ENCODE measurements at regions of chr17 and their contacts with region 1.

Region 1: GRCh38 chr17:409848-410545 is 57.4 kb upstream of the RPH3AL start:
- DNase-seq: peak; percentile 100
- ATAC-seq: peak; percentile 89
- H3K4me3 ChIP-seq: peak overlapping the region; percentile 85 to 87
- H3K27ac ChIP-seq: peak overlapping the region; percentile 39 to 90
- H3K4me1 ChIP-seq: peaks cover 0 to 38% of the 10 kb centered on the region in 2 donors
- H3K27me3 ChIP-seq: no peaks in the 10 kb centered on the region
- CTCF ChIP-seq: no peak

Region 2: GRCh38 chr17:233473-233941 is 176.5 kb before region 1 on chr17:
- intact Hi-C with region 1: no loop called
- DNase-seq: peak in 1 of 4 donors; percentile 31
- ATAC-seq: no peak
- H3K4me3 ChIP-seq: no peak overlapping the region
- H3K27ac ChIP-seq: peak overlapping the region in 1 of 2 donors; percentile 63
- H3K4me1 ChIP-seq: peaks cover 0 to 22% of the 10 kb centered on the region in 2 donors
- H3K27me3 ChIP-seq: no peaks in the 10 kb centered on the region
- CTCF ChIP-seq: no peak

Region 3: GRCh38 chr17:700504-701094 is 290.6 kb after region 1 on chr17:
- intact Hi-C with region 1: loop called in 1 of 2 experiments (anchors 2 kb)
- DNase-seq: peak in 1 of 4 donors; percentile 39
- ATAC-seq: peak; percentile 37
- H3K4me3 ChIP-seq: no peak overlapping the region
- H3K27ac ChIP-seq: no peak overlapping the region
- H3K4me1 ChIP-seq: peaks cover 0 to 48% of the 10 kb centered on the region in 2 donors
- H3K27me3 ChIP-seq: no peaks in the 10 kb centered on the region
- CTCF ChIP-seq: peak; percentile 55 to 59